ENCODE measurements at regions of chr4 and their contacts with region 1.

Region 1: DNA sequence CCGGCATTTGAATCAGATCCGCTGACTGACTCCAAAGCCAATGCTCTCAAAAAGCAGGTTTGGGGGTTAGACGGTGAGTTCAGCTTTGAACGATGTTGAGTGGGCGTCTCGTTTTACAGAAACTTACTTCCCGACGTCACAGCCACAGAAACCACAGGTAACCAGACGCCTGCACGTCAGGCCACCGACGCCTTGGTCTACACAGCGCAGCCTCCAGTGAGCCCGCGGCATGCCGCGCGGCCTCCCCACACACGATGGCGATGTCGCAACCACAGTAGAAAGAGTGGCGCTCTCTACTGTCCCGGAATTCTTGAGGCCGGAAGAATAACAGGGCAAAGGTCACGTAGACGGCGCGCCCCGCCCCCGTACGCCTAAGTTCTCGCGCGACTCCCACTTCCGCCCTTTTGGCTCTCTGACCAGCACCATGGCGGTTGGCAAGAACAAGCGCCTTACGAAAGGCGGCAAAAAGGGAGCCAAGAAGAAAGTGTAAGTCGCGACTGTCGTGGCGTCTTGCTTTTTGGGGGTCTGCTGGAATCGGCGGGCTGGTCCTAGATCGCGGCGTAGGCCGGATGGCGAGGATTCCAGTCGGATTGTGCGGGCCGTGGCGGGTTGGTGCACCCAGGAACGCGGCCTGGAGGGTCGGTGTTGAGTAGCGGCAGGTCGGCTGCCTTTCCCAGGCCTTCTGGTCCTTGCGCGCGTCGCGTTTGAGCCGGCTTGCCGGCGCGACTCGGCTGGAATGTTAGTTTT is at the start of gene RPS3A:
- DNase-seq: peak; percentile 97
- ATAC-seq: peak; percentile 89
- H3K4me3 ChIP-seq: peak within 1 kb of the TSS; percentile 98
- H3K27ac ChIP-seq: peak within 1 kb of the TSS; percentile 78
- H3K4me1 ChIP-seq: peaks cover 23% of the 10 kb centered on the region
- H3K27me3 ChIP-seq: no peaks in the 10 kb centered on the region
- CTCF ChIP-seq: peak; percentile 75 to 90 (median 83)
- EP300 ChIP-seq: peak; percentile 89 to 91
- POLR2A ChIP-seq: peak; percentile 100
- RAD21 ChIP-seq: peak; percentile 35
- polyA plus RNA-seq, gene RPS3A: 5,081 to 5,756 TPM

Region 2: GRCh38 chr4:151031831-151032605 is 67.4 kb before region 1 on chr4:
- CTCF ChIA-PET with region 1: interaction called, 5 read pairs
- POLR2A ChIA-PET with region 1: interaction called, 5 read pairs
- RAD21 ChIA-PET with region 1: no interaction called
- SMC1A ChIA-PET with region 1: interaction called, 7 read pairs
- in situ Hi-C with region 1: no loop called
- intact Hi-C with region 1: loop called (anchors 5 kb)
- DNase-seq: peak; percentile 54
- ATAC-seq: peak; percentile 69
- H3K4me3 ChIP-seq: peak overlapping the region; percentile 38; the same call in 1 of the 2 replicates
- H3K27ac ChIP-seq: peak overlapping the region; percentile 60
- H3K4me1 ChIP-seq: peaks cover 18% of the 10 kb centered on the region
- H3K27me3 ChIP-seq: no peaks in the 10 kb centered on the region
- CTCF ChIP-seq: no peak
- EP300 ChIP-seq: peak; percentile 75 to 82; a peak in 2 of 4 replicates
- POLR2A ChIP-seq: no peak
- RAD21 ChIP-seq: no peak

Region 3: GRCh38 chr4:151052785-151053184 is 46.6 kb before region 1 on chr4:
- CTCF ChIA-PET with region 1: interaction called, 4 read pairs
- POLR2A ChIA-PET with region 1: no interaction called
- RAD21 ChIA-PET with region 1: interaction called, 13 read pairs
- SMC1A ChIA-PET with region 1: interaction called, 7 read pairs
- in situ Hi-C with region 1: no loop called
- intact Hi-C with region 1: loop called (anchors 5 kb)
- DNase-seq: no peak
- ATAC-seq: peak; percentile 7
- H3K4me3 ChIP-seq: no peak overlapping the region
- H3K27ac ChIP-seq: peak overlapping the region; percentile 38
- H3K4me1 ChIP-seq: peaks cover 14% of the 10 kb centered on the region
- H3K27me3 ChIP-seq: no peaks in the 10 kb centered on the region
- CTCF ChIP-seq: no peak
- EP300 ChIP-seq: no peak
- POLR2A ChIP-seq: no peak
- RAD21 ChIP-seq: no peak

Region 4: GRCh38 chr4:151074416-151074916 is 24.9 kb before region 1 on chr4:
- CTCF ChIA-PET with region 1: interaction called, 7 read pairs
- POLR2A ChIA-PET with region 1: no interaction called
- RAD21 ChIA-PET with region 1: interaction called, 7 read pairs
- SMC1A ChIA-PET with region 1: interaction called, 14 read pairs
- in situ Hi-C with region 1: no loop called
- intact Hi-C with region 1: no loop called
- DNase-seq: no peak
- ATAC-seq: no peak
- H3K4me3 ChIP-seq: no peak overlapping the region
- H3K27ac ChIP-seq: no peak overlapping the region
- H3K4me1 ChIP-seq: no peaks in the 10 kb centered on the region
- H3K27me3 ChIP-seq: no peaks in the 10 kb centered on the region
- CTCF ChIP-seq: no peak
- EP300 ChIP-seq: no peak
- POLR2A ChIP-seq: no peak
- RAD21 ChIP-seq: no peak

Measured in GM12878 (cell line).